Colonic mucosa (tissue), 4 donors: ENCODE measurements at regions of chr18 and their contacts with region 1.

Region 1: GRCh38 chr18:59402432-59403090 is 43.5 kb upstream of the LMAN1 start:
- DNase-seq: peak; percentile 65
- H3K4me3 ChIP-seq: no peak overlapping the region
- H3K27ac ChIP-seq: no peak overlapping the region
- H3K4me1 ChIP-seq: no peaks in the 10 kb centered on the region
- H3K27me3 ChIP-seq: no peaks in the 10 kb centered on the region
- CTCF ChIP-seq: peak; percentile 85

Region 2: DNA sequence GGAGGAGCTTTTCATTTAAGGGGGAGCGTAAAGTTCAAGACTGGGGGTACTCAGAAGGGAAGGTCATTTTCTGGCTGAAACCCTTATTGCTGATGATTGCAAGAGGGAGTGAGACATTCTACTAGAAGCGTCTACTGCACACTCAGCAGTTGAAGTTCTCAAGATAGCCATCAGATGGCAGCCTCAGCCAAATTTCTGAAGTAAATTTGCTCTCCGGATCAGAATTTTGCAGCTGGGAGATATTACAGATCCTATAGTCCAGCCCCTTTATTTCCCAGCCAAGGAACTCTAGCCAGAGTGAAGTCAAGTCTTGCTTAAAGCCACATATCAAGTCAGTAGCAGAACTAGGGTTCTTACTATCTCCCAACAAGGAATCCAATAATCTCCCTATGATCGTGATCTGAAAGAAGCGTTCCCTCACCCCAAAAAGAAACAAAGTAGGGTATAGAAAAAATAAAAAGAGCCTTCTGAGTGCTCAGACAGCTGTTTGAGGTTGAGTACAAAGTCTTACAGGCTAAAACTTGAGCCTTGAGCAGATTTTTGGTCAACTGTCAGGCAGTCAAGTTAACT is 153.3 kb before region 1 on chr18:
- intact Hi-C with region 1: loop called (anchors 2 kb)
- DNase-seq: peak; percentile 28
- H3K4me3 ChIP-seq: no peak overlapping the region
- H3K27ac ChIP-seq: no peak overlapping the region
- H3K4me1 ChIP-seq: no peaks in the 10 kb centered on the region
- H3K27me3 ChIP-seq: no peaks in the 10 kb centered on the region
- CTCF ChIP-seq: peak; percentile 58

Region 3: GRCh38 chr18:59311631-59312030 is 90.9 kb before region 1 on chr18:
- intact Hi-C with region 1: loop called (anchors 5 kb)
- DNase-seq: no peak
- H3K4me3 ChIP-seq: no peak overlapping the region
- H3K27ac ChIP-seq: no peak overlapping the region
- H3K4me1 ChIP-seq: no peaks in the 10 kb centered on the region
- H3K27me3 ChIP-seq: peaks cover 8% of the 10 kb centered on the region
- CTCF ChIP-seq: no peak